A673 (cell line): ENCODE measurements at regions of chr9 and their contacts with region 1.

Region 1: GRCh38 chr9:133459476-133460404 is at the start of gene CACFD1:
- DNase-seq: peak; percentile 97
- H3K4me3 ChIP-seq: peak within 1 kb of the TSS; percentile 61
- H3K27ac ChIP-seq: peak within 1 kb of the TSS; percentile 89
- H3K4me1 ChIP-seq: peaks cover 5% of the 10 kb centered on the region
- H3K27me3 ChIP-seq: no peaks in the 10 kb centered on the region
- CTCF ChIP-seq: no peak
- total RNA-seq, gene CACFD1: 7.8 and 10.6 TPM in 2 replicates

Region 2: DNA sequence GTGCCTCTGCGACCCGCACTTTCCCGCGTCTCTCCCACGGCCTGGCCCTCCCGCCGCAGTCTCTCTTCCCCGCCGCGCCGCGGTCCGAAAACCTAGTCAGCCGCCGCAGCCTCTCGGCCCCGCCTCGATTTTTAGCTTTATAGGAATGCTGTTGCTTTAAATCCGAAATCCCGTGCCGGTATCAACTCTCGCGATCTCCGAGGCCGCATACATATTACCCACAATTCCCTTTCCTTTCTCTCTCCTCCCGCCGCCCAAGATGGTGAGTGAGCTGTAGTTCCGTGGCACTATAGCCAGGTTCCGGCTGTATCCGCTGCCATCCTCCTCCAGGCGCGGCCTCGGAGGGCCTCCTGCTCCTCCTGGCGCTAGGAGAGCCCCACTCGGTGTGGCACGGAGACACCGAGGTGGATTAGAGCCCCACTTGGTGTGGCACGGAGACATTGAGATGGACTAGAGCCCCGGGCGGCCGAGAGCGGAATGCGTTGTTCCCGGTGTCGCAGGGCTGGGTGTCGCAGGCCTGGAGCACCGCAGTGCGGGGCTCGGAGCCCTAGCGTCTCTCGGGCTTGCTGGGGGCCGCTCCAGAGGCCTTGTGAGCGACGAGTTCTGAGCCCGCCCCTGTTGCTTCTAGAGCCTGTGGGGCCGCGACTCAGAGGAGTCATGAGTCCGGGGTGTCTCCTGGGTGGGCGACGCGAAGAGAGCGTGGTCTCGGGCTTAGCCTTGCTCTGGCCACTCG is 111.6 kb before region 1 on chr9 and contains the starts of genes MED22 and RPL7A:
- CTCF ChIA-PET with region 1: no interaction called
- POLR2A ChIA-PET with region 1: interaction called, 15 read pairs
- intact Hi-C with region 1: no loop called
- DNase-seq: peak; percentile 97
- H3K4me3 ChIP-seq: peak within 1 kb of the TSS; percentile 98
- H3K27ac ChIP-seq: peak within 1 kb of the TSS; percentile 99
- H3K4me1 ChIP-seq: peaks cover 19% of the 10 kb centered on the region
- H3K27me3 ChIP-seq: no peaks in the 10 kb centered on the region
- CTCF ChIP-seq: no peak
- total RNA-seq, gene MED22: 46.2 and 49.6 TPM in 2 replicates
- total RNA-seq, gene RPL7A: 1,920 and 1,940 TPM in 2 replicates

Region 3: DNA sequence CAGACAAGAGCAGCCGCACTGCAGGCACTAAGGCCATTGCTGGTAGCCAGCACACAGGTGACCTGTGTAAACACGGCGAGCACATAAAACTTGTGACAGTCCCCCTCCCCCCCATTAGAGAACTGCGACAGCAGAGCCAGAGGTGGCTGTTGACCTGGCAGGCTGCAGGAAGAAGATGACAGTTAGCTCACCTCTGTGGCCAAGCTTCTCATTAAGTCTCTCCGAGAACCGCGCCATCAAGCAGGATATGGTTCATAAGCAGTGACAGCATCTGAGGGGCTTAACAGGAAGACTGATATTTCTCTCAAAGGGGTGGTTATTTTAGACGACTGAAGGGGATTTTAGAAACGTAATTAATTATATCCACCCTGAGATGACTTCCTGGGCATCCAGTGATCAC is 89.1 kb before region 1 on chr9:
- CTCF ChIA-PET with region 1: no interaction called
- POLR2A ChIA-PET with region 1: interaction called, 11 read pairs
- intact Hi-C with region 1: no loop called
- DNase-seq: no peak
- H3K4me3 ChIP-seq: no peak overlapping the region
- H3K27ac ChIP-seq: no peak overlapping the region
- H3K4me1 ChIP-seq: no peaks in the 10 kb centered on the region
- H3K27me3 ChIP-seq: no peaks in the 10 kb centered on the region
- CTCF ChIP-seq: no peak